Calu3 (cell line): ENCODE measurements at regions of chr4 and their contacts with region 1.

Region 1: GRCh38 chr4:123547216-123548165 is 150.9 kb downstream of the SPRY1 start:
- DNase-seq: peak; percentile 88
- H3K4me3 Mint-ChIP-seq: peak overlapping the region; percentile 57
- H3K27ac Mint-ChIP-seq: peak overlapping the region; percentile 94
- H3K4me1 Mint-ChIP-seq: peaks cover 30% of the 10 kb centered on the region
- H3K27me3 Mint-ChIP-seq: no peaks in the 10 kb centered on the region
- CTCF ChIP-seq: no peak

Region 2: GRCh38 chr4:122890142-122890769 is 657.2 kb before region 1 on chr4:
- CTCF ChIA-PET with region 1: no interaction called
- intact Hi-C with region 1: no loop called
- DNase-seq: no peak
- H3K4me3 Mint-ChIP-seq: no peak overlapping the region
- H3K27ac Mint-ChIP-seq: peak overlapping the region; percentile 27
- H3K4me1 Mint-ChIP-seq: peaks cover 12% of the 10 kb centered on the region
- H3K27me3 Mint-ChIP-seq: no peaks in the 10 kb centered on the region
- CTCF ChIP-seq: no peak

Region 3: GRCh38 chr4:123398066-123398852 is 149.2 kb before region 1 on chr4:
- CTCF ChIA-PET with region 1: interaction called, 3 read pairs
- intact Hi-C with region 1: loop called (anchors 2 kb)
- DNase-seq: peak; percentile 82
- H3K4me3 Mint-ChIP-seq: peak overlapping the region; percentile 82
- H3K27ac Mint-ChIP-seq: peak overlapping the region; percentile 92
- H3K4me1 Mint-ChIP-seq: peaks cover 23% of the 10 kb centered on the region
- H3K27me3 Mint-ChIP-seq: no peaks in the 10 kb centered on the region
- CTCF ChIP-seq: peak; percentile 46

Region 4: GRCh38 chr4:123505095-123506010 is 42.1 kb before region 1 on chr4:
- CTCF ChIA-PET with region 1: no interaction called
- intact Hi-C with region 1: loop called (anchors 5 kb)
- DNase-seq: peak; percentile 39
- H3K4me3 Mint-ChIP-seq: peak overlapping the region; percentile 93
- H3K27ac Mint-ChIP-seq: peak overlapping the region; percentile 58
- H3K4me1 Mint-ChIP-seq: peaks cover 12% of the 10 kb centered on the region
- H3K27me3 Mint-ChIP-seq: no peaks in the 10 kb centered on the region
- CTCF ChIP-seq: no peak

Region 5: GRCh38 chr4:123588631-123589241 is 41.2 kb after region 1 on chr4:
- CTCF ChIA-PET with region 1: interaction called, 6 read pairs
- intact Hi-C with region 1: loop called (anchors 2 kb)
- DNase-seq: peak; percentile 47
- H3K4me3 Mint-ChIP-seq: peak overlapping the region; percentile 57
- H3K27ac Mint-ChIP-seq: peak overlapping the region; percentile 98
- H3K4me1 Mint-ChIP-seq: peaks cover 33% of the 10 kb centered on the region
- H3K27me3 Mint-ChIP-seq: no peaks in the 10 kb centered on the region
- CTCF ChIP-seq: no peak

Region 6: GRCh38 chr4:123599920-123600810 is 52.7 kb after region 1 on chr4:
- CTCF ChIA-PET with region 1: no interaction called
- intact Hi-C with region 1: loop called (anchors 5 kb)
- DNase-seq: peak; percentile 80
- H3K4me3 Mint-ChIP-seq: no peak overlapping the region
- H3K27ac Mint-ChIP-seq: peak overlapping the region; percentile 81
- H3K4me1 Mint-ChIP-seq: peaks cover 50% of the 10 kb centered on the region
- H3K27me3 Mint-ChIP-seq: no peaks in the 10 kb centered on the region
- CTCF ChIP-seq: no peak